ENCODE measurements at regions of chr2 and their contacts with region 1.

Region 1: DNA sequence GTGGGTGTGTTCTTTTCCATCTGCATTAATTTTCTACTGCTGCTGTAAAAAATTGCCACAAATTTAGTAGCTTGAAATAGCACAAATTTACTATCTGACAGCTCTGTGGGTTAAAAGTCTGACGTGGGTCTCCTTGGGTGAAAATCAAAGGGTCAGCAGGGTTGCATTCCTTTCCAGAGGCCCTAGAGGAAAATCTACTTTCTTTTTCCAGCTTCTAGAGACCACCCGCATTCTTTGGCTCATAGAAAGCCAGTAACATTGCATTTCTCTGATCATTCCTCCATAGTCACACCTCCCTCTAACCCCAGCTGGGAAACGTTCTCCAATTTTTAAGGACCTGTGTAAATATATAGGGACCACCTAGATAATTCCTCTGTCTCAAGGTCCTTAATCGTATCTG is 128.8 kb downstream of the ATL2 start:
- DNase-seq: no peak
- ATAC-seq: no peak
- H3K4me3 ChIP-seq: no peak overlapping the region
- H3K27ac ChIP-seq: no peak overlapping the region
- H3K4me1 ChIP-seq: no peaks in the 10 kb centered on the region
- CTCF ChIP-seq: no peak
- EP300 ChIP-seq: no peak
- POLR2A ChIP-seq: no peak
- RAD21 ChIP-seq: no peak

Region 2: DNA sequence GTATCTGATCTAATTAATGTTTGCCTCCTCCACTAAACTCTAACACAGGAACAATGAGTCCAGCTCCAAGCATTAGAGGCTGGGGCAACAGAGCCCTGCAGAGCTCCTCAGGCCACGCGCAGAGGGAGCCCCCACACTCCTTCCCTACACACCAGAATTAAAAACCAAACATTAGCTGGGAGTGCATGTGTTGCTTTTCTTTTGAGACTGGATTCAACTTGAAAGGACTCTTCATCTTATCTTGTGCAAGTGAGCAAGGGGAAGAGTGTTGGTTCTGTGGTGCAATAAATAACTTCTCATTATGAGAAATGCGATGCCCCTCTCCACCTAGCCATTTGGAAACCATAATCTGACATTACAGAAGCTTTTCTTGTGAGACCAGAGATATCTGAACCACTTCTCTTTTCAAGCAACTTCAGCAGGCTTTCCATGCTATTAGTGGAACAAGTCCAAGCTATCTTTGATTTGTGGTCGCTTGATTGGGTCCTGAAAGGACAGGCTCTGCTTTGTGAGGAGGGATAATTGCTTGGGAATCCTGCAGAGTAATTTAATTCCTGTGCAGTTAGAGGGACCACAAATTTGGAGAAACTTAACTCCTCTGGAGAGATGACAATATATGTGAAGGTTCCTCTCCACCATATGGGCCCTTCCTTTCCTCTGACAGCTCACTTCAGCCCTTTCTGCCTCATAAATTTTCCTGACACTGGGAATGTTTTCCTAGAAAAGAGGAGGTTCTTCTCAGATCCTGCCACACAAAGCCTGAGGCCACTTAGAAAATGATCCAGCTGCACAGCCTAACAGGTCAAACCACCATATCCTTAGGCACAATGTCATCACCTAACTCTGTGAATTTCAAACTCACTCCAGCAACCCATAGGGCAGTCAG is 16.4 kb after region 1 on chr2:
- CTCF ChIA-PET with region 1: interaction called, 10 read pairs
- POLR2A ChIA-PET with region 1: no interaction called
- DNase-seq: no peak
- ATAC-seq: no peak
- H3K4me3 ChIP-seq: no peak overlapping the region
- H3K27ac ChIP-seq: no peak overlapping the region
- H3K4me1 ChIP-seq: no peaks in the 10 kb centered on the region
- CTCF ChIP-seq: no peak
- EP300 ChIP-seq: no peak
- POLR2A ChIP-seq: no peak
- RAD21 ChIP-seq: no peak

Measured in A549 (cell line).